GM10248 (cell line): ENCODE measurements at regions of chr2 and their contacts with region 1.

Region 1: DNA sequence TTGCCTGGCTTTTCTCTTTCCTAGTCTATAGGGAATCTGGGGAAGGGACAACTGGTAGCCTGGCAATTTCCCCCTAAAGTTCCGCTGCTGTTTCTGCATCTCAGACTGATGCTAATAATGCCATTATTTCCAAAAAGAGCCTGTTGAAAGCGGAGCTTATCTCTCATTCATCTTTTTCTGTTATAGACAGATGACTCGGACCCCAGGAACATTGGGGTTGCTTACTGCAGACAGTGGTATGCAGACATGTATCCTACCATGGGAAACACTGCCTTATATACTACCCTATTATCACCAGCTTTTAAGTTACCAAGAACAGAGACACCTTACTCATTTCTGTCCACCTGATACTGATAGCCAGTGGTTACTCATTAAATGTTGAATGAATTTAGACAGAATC is 15.3 kb downstream of the ETAA1 start:
- DNase-seq: no peak
- CTCF ChIP-seq: no peak

Region 2: DNA sequence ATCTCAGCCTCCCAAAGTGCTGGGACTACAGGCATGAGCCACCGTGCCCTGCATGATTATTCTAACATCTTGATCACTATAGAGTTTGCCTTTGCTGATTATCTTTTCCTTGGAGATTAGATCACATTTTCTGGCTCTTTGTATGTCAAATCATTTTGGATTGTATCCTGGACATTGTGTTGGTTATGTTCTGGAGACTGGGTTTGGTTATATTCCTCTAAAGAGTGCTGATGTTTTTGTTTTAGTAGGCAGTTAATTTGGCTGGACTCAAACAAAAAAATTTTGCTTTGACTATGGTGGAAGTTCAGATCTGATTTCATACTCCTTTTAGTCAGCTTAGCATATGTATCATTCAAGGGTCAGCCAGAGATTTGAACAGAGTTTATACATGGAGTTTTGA is 11.1 kb after region 1 on chr2:
- CTCF ChIA-PET with region 1: interaction called, 11 read pairs
- POLR2A ChIA-PET with region 1: no interaction called
- DNase-seq: no peak
- CTCF ChIP-seq: no peak